ENCODE measurements at regions of chr7 and their contacts with region 1.

Region 1: GRCh38 chr7:27196287-27196767 is 3.6 kb downstream of the HOXA13 start:
- DNase-seq: peak; percentile 61
- H3K4me3 ChIP-seq: no peak overlapping the region
- H3K27ac ChIP-seq: no peak overlapping the region
- H3K4me1 ChIP-seq: no peaks in the 10 kb centered on the region
- H3K27me3 ChIP-seq: peaks cover 94% of the 10 kb centered on the region
- CTCF ChIP-seq: peak; percentile 86

Region 2: DNA sequence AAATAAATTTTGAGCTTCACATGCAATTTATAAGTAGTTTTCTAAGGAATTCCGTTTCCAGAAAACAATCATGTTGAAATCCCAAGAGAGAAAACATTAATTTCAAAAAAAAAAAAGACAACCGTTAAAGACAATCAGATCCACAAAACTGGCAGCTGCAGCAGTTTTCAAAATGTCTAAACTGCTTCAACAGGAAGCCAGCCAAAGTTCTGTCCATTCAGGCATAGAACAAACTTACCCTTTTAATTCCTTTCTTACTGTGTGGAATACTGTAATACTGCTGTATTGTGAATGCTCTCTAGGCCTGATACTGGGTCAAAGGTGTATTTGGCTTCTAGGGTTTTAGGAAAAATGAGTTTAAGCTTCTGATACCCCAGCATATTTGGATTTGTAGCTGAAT is 132.2 kb before region 1 on chr7:
- CTCF ChIA-PET with region 1: no interaction called
- POLR2A ChIA-PET with region 1: no interaction called
- intact Hi-C with region 1: no loop called
- DNase-seq: no peak
- H3K4me3 ChIP-seq: no peak overlapping the region
- H3K27ac ChIP-seq: no peak overlapping the region
- H3K4me1 ChIP-seq: no peaks in the 10 kb centered on the region
- H3K27me3 ChIP-seq: peaks cover 20% of the 10 kb centered on the region
- CTCF ChIP-seq: no peak

Region 3: DNA sequence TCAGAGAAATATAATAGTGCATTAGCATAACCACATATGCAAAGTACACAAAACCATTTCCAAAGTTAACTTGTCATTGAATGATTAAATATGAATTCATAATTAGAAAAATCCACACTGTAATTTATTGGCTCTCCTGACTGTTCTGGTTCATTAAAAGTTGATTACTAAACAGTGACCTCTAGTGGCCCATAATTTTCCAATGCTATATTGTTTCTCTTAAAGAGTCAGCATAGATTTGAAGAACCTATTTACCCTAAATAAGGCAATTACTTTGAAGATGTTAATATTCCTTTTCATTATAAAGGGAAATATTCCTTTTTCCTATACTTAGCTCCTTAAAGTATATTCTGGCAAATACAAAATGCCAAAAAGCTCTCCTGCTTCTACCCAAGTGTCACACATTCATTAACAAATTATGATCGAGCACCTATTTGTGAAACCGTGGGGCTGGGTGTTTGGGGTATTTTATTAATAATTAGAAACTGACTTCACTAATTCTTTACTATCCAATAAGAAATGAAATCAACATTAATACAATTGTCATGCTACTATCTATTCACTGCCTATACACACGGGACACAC is 380.1 kb after region 1 on chr7:
- CTCF ChIA-PET with region 1: no interaction called
- POLR2A ChIA-PET with region 1: no interaction called
- intact Hi-C with region 1: loop called (anchors 5 kb)
- DNase-seq: peak; percentile 45
- H3K4me3 ChIP-seq: no peak overlapping the region
- H3K27ac ChIP-seq: no peak overlapping the region
- H3K4me1 ChIP-seq: no peaks in the 10 kb centered on the region
- H3K27me3 ChIP-seq: no peaks in the 10 kb centered on the region
- CTCF ChIP-seq: peak; percentile 69

Region 4: GRCh38 chr7:27784393-27785053 is 588.2 kb after region 1 on chr7:
- CTCF ChIA-PET with region 1: no interaction called
- POLR2A ChIA-PET with region 1: no interaction called
- intact Hi-C with region 1: loop called (anchors 5 kb)
- DNase-seq: peak; percentile 63
- H3K4me3 ChIP-seq: no peak overlapping the region
- H3K27ac ChIP-seq: no peak overlapping the region
- H3K4me1 ChIP-seq: no peaks in the 10 kb centered on the region
- H3K27me3 ChIP-seq: no peaks in the 10 kb centered on the region
- CTCF ChIP-seq: peak; percentile 66

Region 5: GRCh38 chr7:28020302-28020940 is 824.1 kb after region 1 on chr7:
- CTCF ChIA-PET with region 1: interaction called, 4 read pairs
- POLR2A ChIA-PET with region 1: no interaction called
- intact Hi-C with region 1: loop called (anchors 1 kb)
- DNase-seq: peak; percentile 80
- H3K4me3 ChIP-seq: no peak overlapping the region
- H3K27ac ChIP-seq: no peak overlapping the region
- H3K4me1 ChIP-seq: no peaks in the 10 kb centered on the region
- H3K27me3 ChIP-seq: peaks cover 73% of the 10 kb centered on the region
- CTCF ChIP-seq: peak; percentile 72

Region 6: GRCh38 chr7:28096713-28097112 is 900.4 kb after region 1 on chr7:
- CTCF ChIA-PET with region 1: interaction called, 3 read pairs
- POLR2A ChIA-PET with region 1: no interaction called
- intact Hi-C with region 1: loop called (anchors 5 kb)
- DNase-seq: peak; percentile 54
- H3K4me3 ChIP-seq: no peak overlapping the region
- H3K27ac ChIP-seq: no peak overlapping the region
- H3K4me1 ChIP-seq: no peaks in the 10 kb centered on the region
- H3K27me3 ChIP-seq: peaks cover 3% of the 10 kb centered on the region
- CTCF ChIP-seq: peak; percentile 85